ENCODE measurements at regions of chr22 and their contacts with region 1.

Region 1: GRCh38 chr22:49838771-49839717 is 11.4 kb upstream of the BRD1 start:
- DNase-seq: peak; percentile 91
- ATAC-seq: peak; percentile 96
- H3K4me3 Mint-ChIP-seq: peak overlapping the region; percentile 59
- H3K27ac Mint-ChIP-seq: peak overlapping the region; percentile 91
- H3K4me1 Mint-ChIP-seq: peaks cover 36% of the 10 kb centered on the region
- H3K27me3 Mint-ChIP-seq: peaks cover 4% of the 10 kb centered on the region

Region 2: GRCh38 chr22:49853981-49854831 is 15.2 kb after region 1 on chr22:
- CTCF ChIA-PET with region 1: interaction called, 5 read pairs
- POLR2A ChIA-PET with region 1: interaction called, 19 read pairs
- DNase-seq: peak; percentile 50
- ATAC-seq: peak; percentile 37
- H3K4me3 Mint-ChIP-seq: peak overlapping the region; percentile 97
- H3K27ac Mint-ChIP-seq: peak overlapping the region; percentile 93
- H3K4me1 Mint-ChIP-seq: peaks cover 54% of the 10 kb centered on the region
- H3K27me3 Mint-ChIP-seq: peaks cover 6% of the 10 kb centered on the region

Region 3: DNA sequence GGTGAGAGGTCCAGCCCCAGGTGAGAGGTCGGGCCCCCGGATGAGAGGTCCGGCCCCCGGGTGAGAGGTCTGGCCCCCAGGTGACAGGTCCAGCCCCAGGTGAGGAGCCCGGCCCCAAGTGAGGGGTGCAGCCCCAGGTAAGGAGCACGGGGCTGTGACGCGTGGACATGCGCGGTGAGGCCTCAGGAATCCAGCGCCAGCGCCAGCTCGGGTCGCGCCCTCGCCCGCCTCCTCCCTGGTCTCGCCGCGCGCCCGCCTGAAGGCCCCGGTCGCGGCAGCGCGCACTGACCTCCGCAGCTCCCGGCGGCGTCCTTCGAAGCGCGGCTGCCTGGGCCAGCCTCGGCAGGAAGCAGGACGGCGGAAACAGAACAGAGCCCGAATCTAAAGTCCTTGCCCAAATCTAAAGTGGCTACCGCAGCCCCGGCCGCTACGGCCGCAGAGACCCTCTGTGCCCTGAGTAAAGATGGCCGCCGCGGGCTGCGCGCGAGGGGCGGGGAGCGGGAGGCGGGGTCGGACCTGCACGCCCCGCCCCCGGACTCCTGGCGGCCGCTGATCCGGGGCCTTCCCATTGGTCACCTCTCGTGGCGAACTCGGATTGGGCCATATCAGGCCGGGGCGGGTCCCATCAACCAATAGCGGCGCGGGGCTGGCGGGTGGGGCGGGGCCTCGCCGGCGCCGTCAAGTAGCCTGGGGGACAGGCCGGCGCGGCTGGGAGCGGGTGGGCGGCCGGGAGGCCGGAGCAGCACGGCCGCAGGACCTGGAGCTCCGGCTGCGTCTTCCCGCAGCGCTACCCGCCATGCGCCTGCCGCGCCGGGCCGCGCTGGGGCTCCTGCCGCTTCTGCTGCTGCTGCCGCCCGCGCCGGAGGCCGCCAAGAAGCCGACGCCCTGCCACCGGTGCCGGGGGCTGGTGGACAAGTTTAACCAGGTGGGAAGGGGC is 79.2 kb after region 1 on chr22 and contains the starts of genes ALG12 and CRELD2:
- CTCF ChIA-PET with region 1: no interaction called
- POLR2A ChIA-PET with region 1: no interaction called
- DNase-seq: peak; percentile 98
- ATAC-seq: peak; percentile 98
- H3K4me3 Mint-ChIP-seq: peak within 1 kb of the TSS; percentile 81
- H3K27ac Mint-ChIP-seq: peak within 1 kb of the TSS; percentile 88
- H3K4me1 Mint-ChIP-seq: peaks cover 31% of the 10 kb centered on the region
- H3K27me3 Mint-ChIP-seq: no peaks in the 10 kb centered on the region
- total RNA-seq, gene ALG12: 16.3 to 17.4 TPM
- total RNA-seq, gene CRELD2: 58.0 to 58.1 TPM

Measured in activated CD8-positive, alpha-beta T cell treated with anti-CD3 and anti-CD28 coated beads, Interleukin-2, amount 10 ng/mL, durations not matched to agents 7 days and 5 days (primary cell).